IMR-90 (cell line): ENCODE measurements at regions of chr5 and their contacts with region 1.

Region 1: DNA sequence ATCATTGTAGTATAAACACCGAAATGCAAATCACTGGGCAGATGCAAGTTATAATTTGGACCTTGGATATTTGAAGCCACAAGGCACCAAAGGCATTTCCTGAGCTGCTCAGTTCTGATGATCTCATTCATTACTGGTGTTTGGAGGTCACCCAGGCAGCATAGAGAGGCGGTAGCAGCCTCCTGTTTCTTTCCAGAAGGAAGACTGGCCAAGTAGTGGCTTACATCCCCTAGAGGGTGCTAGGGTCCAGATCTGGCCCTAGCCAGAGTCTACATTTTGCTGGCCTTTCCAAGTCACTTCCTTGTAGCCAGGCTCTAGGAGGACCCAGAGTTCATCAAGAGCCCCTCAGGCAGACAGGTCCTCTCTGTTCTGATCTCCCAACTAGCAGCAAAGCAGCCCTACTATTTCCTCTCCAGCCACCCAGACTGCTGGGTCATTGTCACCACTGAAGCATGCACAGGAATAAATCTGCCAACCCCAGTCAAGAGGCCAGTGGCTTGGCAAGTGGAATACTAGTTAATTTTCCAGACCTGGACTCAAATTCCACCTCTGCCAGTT is 33.4 kb upstream of the TTC1 start:
- DNase-seq: peak; percentile 97
- ATAC-seq: peak; percentile 95
- H3K4me3 ChIP-seq: no peak overlapping the region
- H3K27ac ChIP-seq: peak overlapping the region; percentile 77
- H3K4me1 ChIP-seq: peaks cover 19% of the 10 kb centered on the region
- H3K27me3 ChIP-seq: no peaks in the 10 kb centered on the region
- CTCF ChIP-seq: peak; percentile 74
- POLR2A ChIP-seq: no peak
- RAD21 ChIP-seq: peak; percentile 69

Region 2: DNA sequence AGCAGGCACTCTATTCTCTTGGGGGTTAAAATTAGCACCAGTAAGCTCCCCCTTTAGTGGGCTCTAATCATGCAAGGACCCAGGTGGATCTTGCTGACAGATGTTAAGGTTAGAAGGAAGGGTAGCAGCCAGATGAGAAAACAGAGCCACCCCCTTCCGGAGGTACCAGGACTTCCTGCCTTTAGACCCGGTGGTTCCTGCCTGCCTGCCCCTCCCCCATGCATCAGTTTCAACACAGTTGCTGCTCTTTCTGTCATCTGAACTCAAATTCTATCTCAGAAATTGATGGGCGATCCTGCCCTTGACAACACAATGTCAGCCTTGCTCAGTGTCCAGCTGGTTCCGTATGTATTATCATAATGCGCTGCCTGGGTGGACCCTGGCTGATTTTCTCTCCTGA is 1163.1 kb before region 1 on chr5:
- CTCF ChIA-PET with region 1: no interaction called
- POLR2A ChIA-PET with region 1: no interaction called
- dilution Hi-C with region 1: no loop called
- in situ Hi-C with region 1: no loop called
- intact Hi-C with region 1: no loop called
- DNase-seq: no peak
- ATAC-seq: no peak
- H3K4me3 ChIP-seq: no peak overlapping the region
- H3K27ac ChIP-seq: no peak overlapping the region
- H3K4me1 ChIP-seq: no peaks in the 10 kb centered on the region
- H3K27me3 ChIP-seq: no peaks in the 10 kb centered on the region
- CTCF ChIP-seq: no peak
- POLR2A ChIP-seq: no peak
- RAD21 ChIP-seq: no peak

Region 3: GRCh38 chr5:159209438-159210305 is 765.9 kb before region 1 on chr5 and contains the start of gene RNF145:
- CTCF ChIA-PET with region 1: no interaction called
- POLR2A ChIA-PET with region 1: no interaction called
- dilution Hi-C with region 1: no loop called
- in situ Hi-C with region 1: no loop called
- intact Hi-C with region 1: loop called (anchors 10 kb)
- DNase-seq: peak; percentile 86
- ATAC-seq: peak; percentile 74
- H3K4me3 ChIP-seq: peak within 1 kb of the TSS; percentile 83
- H3K27ac ChIP-seq: peak within 1 kb of the TSS; percentile 100
- H3K4me1 ChIP-seq: 0 out of 2 replicates have a peak, but pooled peaks cover 2% of the 10 kb centered on the region
- H3K27me3 ChIP-seq: no peaks in the 10 kb centered on the region
- CTCF ChIP-seq: no peak
- POLR2A ChIP-seq: peak; percentile 61; the same call in 1 of the 2 replicates
- RAD21 ChIP-seq: 0 out of 2 replicates have a peak, but pooled peaks have one; percentile 4
- total RNA-seq, gene RNF145: 50.0 and 68.0 TPM in 2 replicates

Region 4: DNA sequence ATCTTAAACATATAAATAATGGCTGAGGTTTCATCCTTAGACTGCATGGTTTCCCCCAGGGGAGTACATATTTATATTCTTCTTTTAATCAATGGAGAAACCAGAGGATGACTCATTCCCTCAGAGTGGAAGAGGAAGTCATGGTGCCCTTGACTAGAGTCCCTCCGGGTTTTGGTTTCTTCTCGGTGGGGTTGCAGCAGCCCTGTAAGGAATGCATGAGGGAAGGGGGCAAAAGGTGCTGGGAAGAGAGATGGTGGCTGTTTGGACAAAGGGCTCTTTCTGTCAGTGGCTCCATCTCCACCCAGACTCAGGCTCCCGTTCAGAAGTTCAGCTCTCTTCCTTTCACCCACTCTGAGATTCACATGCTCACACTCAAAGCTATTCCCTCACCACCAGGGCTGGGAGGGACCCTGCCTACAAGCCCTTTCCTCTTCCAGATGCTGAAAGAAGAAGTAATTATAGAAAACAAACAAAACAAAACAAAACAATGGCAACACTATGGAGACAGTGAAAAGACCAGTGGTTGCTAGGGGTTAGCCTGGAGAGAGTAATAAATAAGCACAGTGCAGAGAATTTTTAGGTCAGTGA is 515.5 kb before region 1 on chr5:
- CTCF ChIA-PET with region 1: no interaction called
- POLR2A ChIA-PET with region 1: no interaction called
- dilution Hi-C with region 1: no loop called
- in situ Hi-C with region 1: no loop called
- intact Hi-C with region 1: no loop called
- DNase-seq: peak; percentile 40
- ATAC-seq: peak; percentile 33
- H3K4me3 ChIP-seq: no peak overlapping the region
- H3K27ac ChIP-seq: no peak overlapping the region
- H3K4me1 ChIP-seq: peaks cover 15% of the 10 kb centered on the region
- H3K27me3 ChIP-seq: no peaks in the 10 kb centered on the region
- CTCF ChIP-seq: no peak
- POLR2A ChIP-seq: no peak
- RAD21 ChIP-seq: no peak

Region 5: GRCh38 chr5:159764283-159765134 is 211.0 kb before region 1 on chr5:
- CTCF ChIA-PET with region 1: interaction called, 7 read pairs
- POLR2A ChIA-PET with region 1: interaction called, 7 read pairs
- dilution Hi-C with region 1: no loop called
- in situ Hi-C with region 1: no loop called
- intact Hi-C with region 1: loop called (anchors 10 kb)
- DNase-seq: peak; percentile 94
- ATAC-seq: peak; percentile 82
- H3K4me3 ChIP-seq: no peak overlapping the region
- H3K27ac ChIP-seq: peak overlapping the region; percentile 95
- H3K4me1 ChIP-seq: peaks cover 19% of the 10 kb centered on the region
- H3K27me3 ChIP-seq: no peaks in the 10 kb centered on the region
- CTCF ChIP-seq: no peak
- POLR2A ChIP-seq: no peak
- RAD21 ChIP-seq: no peak

Region 6: DNA sequence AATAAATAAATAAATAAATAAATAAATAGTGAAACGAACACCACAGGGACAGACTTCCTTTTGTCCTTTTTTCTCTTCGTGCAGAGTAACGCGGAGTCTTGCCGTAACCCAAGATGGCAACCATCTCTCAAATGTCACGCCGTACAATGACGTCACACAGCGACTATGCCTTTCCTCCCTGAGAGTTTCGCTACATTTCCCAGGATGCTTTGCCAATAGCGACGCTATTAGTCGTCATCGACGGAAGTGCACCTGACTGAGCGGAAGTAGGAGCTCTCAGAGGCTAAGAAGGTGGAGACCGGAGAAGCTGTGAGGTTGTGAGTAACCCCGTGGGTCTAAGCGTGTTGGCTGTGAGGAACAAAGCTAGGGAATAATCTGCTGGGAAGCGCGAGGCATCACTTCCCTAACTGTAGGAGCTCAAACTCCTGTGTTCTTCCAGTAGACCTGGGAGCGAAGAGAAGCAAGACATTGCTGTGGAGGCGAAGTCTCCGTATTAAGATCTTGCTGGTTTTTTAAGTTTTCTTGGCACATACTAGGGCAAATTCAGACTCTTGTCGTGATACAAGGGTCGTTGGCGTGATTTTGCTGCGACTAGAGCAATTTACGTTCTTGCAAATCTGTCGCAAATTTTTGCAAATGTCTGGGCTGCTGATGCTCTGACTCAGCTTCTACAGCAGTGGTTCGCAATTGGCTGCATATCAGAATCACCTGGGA is 33.5 kb after region 1 on chr5 and contains the start of gene TTC1:
- CTCF ChIA-PET with region 1: no interaction called
- POLR2A ChIA-PET with region 1: no interaction called
- dilution Hi-C with region 1: no loop called
- in situ Hi-C with region 1: no loop called
- intact Hi-C with region 1: loop called (anchors 1 kb)
- DNase-seq: peak; percentile 100
- ATAC-seq: peak; percentile 96
- H3K4me3 ChIP-seq: peak within 1 kb of the TSS; percentile 77
- H3K27ac ChIP-seq: peak within 1 kb of the TSS; percentile 62
- H3K4me1 ChIP-seq: peaks cover 1% of the 10 kb centered on the region
- H3K27me3 ChIP-seq: no peaks in the 10 kb centered on the region
- CTCF ChIP-seq: no peak
- POLR2A ChIP-seq: peak; percentile 90
- RAD21 ChIP-seq: no peak
- total RNA-seq, gene TTC1: 23.1 and 46.9 TPM in 2 replicates